ENCODE measurements at regions of chr20 and their contacts with region 1.

Region 1: GRCh38 chr20:32819992-32820710 is 397 bp downstream of the MAPRE1 start:
- DNase-seq: peak in 7 of 9 donors; percentile 81 to 96 (median 93)
- ATAC-seq: peak; percentile 85
- H3K4me3 ChIP-seq: peak overlapping the region; percentile 93
- H3K4me3 Mint-ChIP-seq: peak overlapping the region; percentile 89 to 99 (median 94)
- H3K27ac ChIP-seq: peak overlapping the region; percentile 85
- H3K27ac Mint-ChIP-seq: peak overlapping the region; percentile 66 to 99 (median 98)
- H3K4me1 ChIP-seq: peaks cover 22 to 34% of the 10 kb centered on the region in 2 donors
- H3K4me1 Mint-ChIP-seq: peaks cover 28 to 49% (median 44%) of the 10 kb centered on the region in 7 donors
- H3K27me3 ChIP-seq: no peaks in the 10 kb centered on the region
- H3K27me3 Mint-ChIP-seq: no peaks in the 10 kb centered on the region

Region 2: GRCh38 chr20:32648761-32649650 is 171.1 kb before region 1 on chr20:
- CTCF ChIA-PET with region 1: no interaction called
- POLR2A ChIA-PET with region 1: no interaction called
- intact Hi-C with region 1: no loop called
- DNase-seq: no peak
- ATAC-seq: peak; percentile 23
- H3K4me3 ChIP-seq: no peak overlapping the region
- H3K4me3 Mint-ChIP-seq: no peak overlapping the region
- H3K27ac ChIP-seq: no peak overlapping the region
- H3K27ac Mint-ChIP-seq: peak overlapping the region in 1 of 9 donors; percentile 34
- H3K4me1 ChIP-seq: peaks cover 5 to 6% of the 10 kb centered on the region in 2 donors
- H3K4me1 Mint-ChIP-seq: peaks cover 0 to 14% (median 12%) of the 10 kb centered on the region in 7 donors
- H3K27me3 ChIP-seq: no peaks in the 10 kb centered on the region
- H3K27me3 Mint-ChIP-seq: no peaks in the 10 kb centered on the region

Region 3: DNA sequence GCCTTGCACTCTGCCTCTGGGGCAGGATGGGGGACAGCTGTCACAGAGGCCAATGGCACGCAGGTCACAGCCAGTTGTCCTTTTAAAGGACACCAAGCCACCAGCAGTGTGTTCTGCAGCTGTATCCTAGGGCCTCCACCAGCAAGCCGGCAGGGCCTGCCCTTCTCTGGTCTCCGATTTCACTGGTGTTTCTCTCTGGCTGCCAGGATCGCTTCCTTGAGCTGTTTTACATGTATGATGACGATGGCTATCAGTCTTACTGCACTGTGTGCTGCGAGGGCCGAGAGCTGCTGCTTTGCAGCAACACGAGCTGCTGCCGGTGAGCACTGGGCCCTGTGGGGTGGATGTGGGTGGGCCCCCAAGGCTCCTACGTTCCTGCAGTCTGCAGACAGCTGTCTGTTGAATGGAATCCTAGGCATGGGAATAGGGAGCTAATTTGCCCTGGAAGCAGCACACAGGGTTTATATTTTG is 23.1 kb before region 1 on chr20:
- CTCF ChIA-PET with region 1: interaction called, 5 read pairs
- POLR2A ChIA-PET with region 1: interaction called, 11 read pairs
- intact Hi-C with region 1: loop called in 1 of 2 experiments (anchors 1 kb)
- DNase-seq: no peak
- ATAC-seq: no peak
- H3K4me3 ChIP-seq: no peak overlapping the region
- H3K4me3 Mint-ChIP-seq: peak overlapping the region in 4 of 10 donors; percentile 16 to 49 (median 36)
- H3K27ac ChIP-seq: no peak overlapping the region
- H3K27ac Mint-ChIP-seq: peak overlapping the region in 8 of 9 donors; percentile 41 to 94 (median 82)
- H3K4me1 ChIP-seq: peaks cover 3 to 46% of the 10 kb centered on the region in 2 donors
- H3K4me1 Mint-ChIP-seq: peaks cover 14 to 53% (median 51%) of the 10 kb centered on the region in 7 donors
- H3K27me3 ChIP-seq: no peaks in the 10 kb centered on the region
- H3K27me3 Mint-ChIP-seq: no peaks in the 10 kb centered on the region

Region 4: DNA sequence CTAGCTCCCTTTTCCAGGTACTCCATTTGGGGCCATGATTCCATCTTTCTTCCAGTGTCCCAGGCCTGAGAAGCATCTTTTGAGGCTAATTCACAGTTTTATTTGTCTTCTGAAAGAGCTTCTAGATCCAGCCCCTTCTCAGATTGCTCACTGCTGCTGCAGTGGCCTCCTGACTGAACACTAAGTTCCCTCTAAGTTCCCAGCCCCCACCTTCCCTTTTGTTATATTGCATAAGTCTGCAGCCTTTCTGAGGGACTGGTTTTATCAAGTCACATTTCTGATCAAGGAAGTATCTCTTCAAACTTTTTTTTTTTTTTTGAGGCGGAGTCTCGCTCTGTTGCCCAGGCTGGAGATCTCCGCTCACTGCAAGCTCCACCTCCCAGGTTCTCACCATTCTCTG is 10.3 kb after region 1 on chr20:
- CTCF ChIA-PET with region 1: interaction called, 4 read pairs
- POLR2A ChIA-PET with region 1: interaction called, 26 read pairs
- intact Hi-C with region 1: loop called in 1 of 2 experiments (anchors 1 kb)
- DNase-seq: peak in 2 of 9 donors; percentile 18 to 33
- ATAC-seq: peak; percentile 84
- H3K4me3 ChIP-seq: no peak overlapping the region
- H3K4me3 Mint-ChIP-seq: peak overlapping the region in 8 of 10 donors; percentile 12 to 70 (median 54)
- H3K27ac ChIP-seq: no peak overlapping the region
- H3K27ac Mint-ChIP-seq: peak overlapping the region; percentile 34 to 90 (median 85)
- H3K4me1 ChIP-seq: peaks cover 8 to 49% of the 10 kb centered on the region in 2 donors
- H3K4me1 Mint-ChIP-seq: peaks cover 35 to 87% (median 78%) of the 10 kb centered on the region in 7 donors
- H3K27me3 ChIP-seq: no peaks in the 10 kb centered on the region
- H3K27me3 Mint-ChIP-seq: no peaks in the 10 kb centered on the region

Region 5: GRCh38 chr20:32839982-32840285 is 19.8 kb after region 1 on chr20:
- CTCF ChIA-PET with region 1: interaction called, 3 read pairs
- POLR2A ChIA-PET with region 1: interaction called, 26 read pairs
- intact Hi-C with region 1: no loop called
- DNase-seq: no peak
- ATAC-seq: no peak
- H3K4me3 ChIP-seq: no peak overlapping the region
- H3K4me3 Mint-ChIP-seq: peak overlapping the region in 1 of 10 donors; percentile 11
- H3K27ac ChIP-seq: no peak overlapping the region
- H3K27ac Mint-ChIP-seq: peak overlapping the region in 8 of 9 donors; percentile 33 to 83 (median 58)
- H3K4me1 ChIP-seq: peaks cover 0 to 14% of the 10 kb centered on the region in 2 donors
- H3K4me1 Mint-ChIP-seq: peaks cover 16 to 69% (median 55%) of the 10 kb centered on the region in 7 donors
- H3K27me3 ChIP-seq: no peaks in the 10 kb centered on the region
- H3K27me3 Mint-ChIP-seq: no peaks in the 10 kb centered on the region

Measured in naive thymus-derived CD4-positive, alpha-beta T cell (primary cell).